Cardiac septum (tissue), 1 donor: ENCODE measurements at regions of chr2 and their contacts with region 1.

Region 1: GRCh38 chr2:59462422-59463197 is 1090.8 kb downstream of the BCL11A start:
- DNase-seq: no peak

Region 2: DNA sequence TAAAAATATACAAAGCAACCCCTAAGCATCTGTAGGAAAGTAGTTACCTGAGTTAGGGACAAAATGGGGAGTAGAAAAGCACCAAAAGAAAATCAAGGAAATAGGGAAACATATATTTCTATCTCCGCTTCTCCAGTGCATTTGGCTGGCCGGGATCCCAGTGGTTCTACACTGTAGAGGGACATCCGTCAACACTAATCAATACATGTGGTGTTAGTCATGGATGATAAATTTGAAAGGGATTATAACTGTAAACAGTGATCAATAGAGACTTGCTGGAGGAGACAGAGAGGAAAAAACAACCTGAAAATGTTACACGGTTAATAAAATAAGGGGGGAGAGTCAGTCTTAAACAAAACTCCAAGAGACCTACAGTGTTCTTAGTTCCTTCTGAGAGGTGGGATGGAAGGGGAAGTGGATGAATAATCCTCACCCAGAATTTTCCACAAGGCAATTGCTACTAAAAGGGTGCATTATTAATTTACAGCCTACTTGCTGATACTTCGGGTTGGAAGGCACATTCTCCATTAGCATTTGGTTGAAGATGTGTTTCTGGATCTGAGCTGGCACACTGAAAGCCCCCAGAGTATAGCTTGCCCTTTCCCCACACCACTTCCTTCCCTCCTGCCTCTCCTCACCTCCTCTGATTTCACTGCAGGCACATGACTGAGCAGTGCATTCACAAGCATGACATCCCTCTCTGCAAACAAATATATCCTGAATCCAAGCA is 560.8 kb after region 1 on chr2:
- intact Hi-C with region 1: no loop called
- DNase-seq: no peak

Region 3: DNA sequence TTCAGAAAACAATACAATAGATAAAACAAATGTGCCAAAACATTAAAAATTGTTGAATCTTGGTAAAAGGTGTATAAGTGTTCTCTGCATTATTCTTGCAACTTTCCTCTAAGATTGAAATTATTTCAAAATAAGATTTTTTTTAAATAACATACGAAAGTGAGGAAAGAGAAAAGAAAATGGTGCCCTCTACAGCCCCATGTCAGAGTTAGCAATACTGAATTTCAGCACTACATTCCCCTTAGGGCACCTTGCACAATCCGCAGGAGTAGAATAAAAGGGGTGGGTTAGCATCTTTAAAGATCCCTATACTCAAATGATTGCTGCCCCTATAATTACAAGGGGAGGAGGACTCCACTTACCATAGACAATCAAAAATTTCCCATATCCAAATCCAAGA is 657.2 kb after region 1 on chr2:
- intact Hi-C with region 1: loop called (anchors 10 kb)
- DNase-seq: no peak